ENCODE measurements at regions of chr22 and their contacts with region 1.

Region 1: DNA sequence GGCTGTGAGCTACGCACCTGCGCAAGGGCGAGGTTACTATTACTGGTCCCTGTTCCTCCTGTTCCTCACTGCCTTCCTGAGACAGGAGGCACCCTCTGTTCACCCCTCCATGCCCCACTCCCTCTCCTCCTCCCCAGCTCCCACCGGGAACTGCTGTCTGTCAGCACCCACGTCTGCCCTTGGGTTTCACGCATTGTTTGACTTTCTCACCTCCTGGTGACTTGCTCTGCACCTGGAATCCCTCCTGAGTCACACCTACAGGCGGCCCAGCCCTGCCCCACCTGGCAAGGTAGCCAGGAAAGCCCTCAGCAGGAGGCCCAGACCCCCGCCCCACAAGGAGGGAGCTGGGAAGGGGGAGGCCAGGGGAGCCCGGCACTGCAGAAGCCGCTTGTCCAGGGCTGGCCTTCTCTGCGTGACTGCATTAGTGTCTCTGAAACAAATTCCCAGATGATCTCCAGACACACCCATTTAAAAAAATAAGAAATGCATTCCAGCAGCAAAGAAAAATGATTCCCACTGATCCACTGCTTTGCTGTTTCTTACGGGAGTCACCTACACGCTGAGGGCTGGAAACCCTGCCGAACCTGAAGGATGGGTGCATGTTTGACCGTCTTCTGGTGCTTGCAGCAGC is 86.4 kb downstream of the CELSR1 start:
- DNase-seq: peak; percentile 36 to 52
- H3K4me3 ChIP-seq: no peak overlapping the region
- H3K4me3 Mint-ChIP-seq: no peak overlapping the region
- H3K27ac Mint-ChIP-seq: peak overlapping the region; percentile 74
- H3K4me1 ChIP-seq: peaks cover 32% of the 10 kb centered on the region
- H3K4me1 Mint-ChIP-seq: peaks cover 12% of the 10 kb centered on the region
- H3K27me3 ChIP-seq: no peaks in the 10 kb centered on the region
- H3K27me3 Mint-ChIP-seq: no peaks in the 10 kb centered on the region
- CTCF ChIP-seq: no peak

Region 2: GRCh38 chr22:46432164-46433068 is 18.6 kb before region 1 on chr22:
- CTCF ChIA-PET with region 1: no interaction called
- POLR2A ChIA-PET with region 1: no interaction called
- intact Hi-C with region 1: loop called (anchors 1 kb)
- DNase-seq: no peak
- H3K4me3 ChIP-seq: no peak overlapping the region
- H3K4me3 Mint-ChIP-seq: no peak overlapping the region
- H3K27ac Mint-ChIP-seq: peak overlapping the region; percentile 63
- H3K4me1 ChIP-seq: peaks cover 21% of the 10 kb centered on the region
- H3K4me1 Mint-ChIP-seq: peaks cover 15% of the 10 kb centered on the region
- H3K27me3 ChIP-seq: no peaks in the 10 kb centered on the region
- H3K27me3 Mint-ChIP-seq: no peaks in the 10 kb centered on the region
- CTCF ChIP-seq: no peak

Region 3: GRCh38 chr22:46476547-46476941 is 25.5 kb after region 1 on chr22:
- CTCF ChIA-PET with region 1: no interaction called
- POLR2A ChIA-PET with region 1: no interaction called
- intact Hi-C with region 1: no loop called
- DNase-seq: no peak
- H3K4me3 ChIP-seq: no peak overlapping the region
- H3K4me3 Mint-ChIP-seq: no peak overlapping the region
- H3K27ac Mint-ChIP-seq: no peak overlapping the region
- H3K4me1 ChIP-seq: no peaks in the 10 kb centered on the region
- H3K4me1 Mint-ChIP-seq: no peaks in the 10 kb centered on the region
- H3K27me3 ChIP-seq: no peaks in the 10 kb centered on the region
- H3K27me3 Mint-ChIP-seq: no peaks in the 10 kb centered on the region
- CTCF ChIP-seq: no peak

Region 4: DNA sequence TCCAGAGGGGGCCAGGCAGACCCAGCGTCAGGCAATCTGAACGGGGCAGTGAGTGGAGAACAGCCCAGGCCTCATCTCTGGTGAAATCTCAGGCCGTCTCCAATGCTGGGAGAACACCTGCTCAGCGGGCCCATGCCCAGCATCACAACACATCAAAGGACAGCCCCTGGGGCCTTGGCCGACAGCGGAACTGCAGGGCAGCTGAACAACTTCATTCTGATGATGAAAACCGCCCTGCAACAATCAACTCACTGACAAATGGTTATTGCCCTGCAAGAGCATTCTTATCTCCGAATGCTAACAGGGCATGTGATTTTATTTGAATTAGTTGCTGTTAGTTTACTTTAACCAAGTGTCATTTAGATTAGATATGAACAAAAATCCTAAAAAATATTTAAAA is 71.8 kb after region 1 on chr22:
- CTCF ChIA-PET with region 1: no interaction called
- POLR2A ChIA-PET with region 1: no interaction called
- intact Hi-C with region 1: no loop called
- DNase-seq: peak; percentile 65 to 69
- H3K4me3 ChIP-seq: no peak overlapping the region
- H3K4me3 Mint-ChIP-seq: no peak overlapping the region
- H3K27ac Mint-ChIP-seq: no peak overlapping the region
- H3K4me1 ChIP-seq: peaks cover 9% of the 10 kb centered on the region
- H3K4me1 Mint-ChIP-seq: peaks cover 12% of the 10 kb centered on the region
- H3K27me3 ChIP-seq: no peaks in the 10 kb centered on the region
- H3K27me3 Mint-ChIP-seq: no peaks in the 10 kb centered on the region
- CTCF ChIP-seq: no peak

Measured in Caco-2 (cell line).